Mammary epithelial cell (primary cell): ENCODE measurements at regions of chr1 and their contacts with region 1.

Region 1: GRCh38 chr1:110412576-110412975 is 5.1 kb upstream of the LAMTOR5 start:
- DNase-seq: peak; percentile 58
- H3K4me3 ChIP-seq: no peak overlapping the region
- H3K27ac ChIP-seq: no peak overlapping the region
- H3K4me1 ChIP-seq: no peaks in the 10 kb centered on the region
- H3K27me3 ChIP-seq: no peaks in the 10 kb centered on the region
- CTCF ChIP-seq: peak; percentile 63 to 89

Region 2: GRCh38 chr1:110433803-110434202 is 21.2 kb after region 1 on chr1:
- CTCF ChIA-PET with region 1: interaction called, 5 read pairs
- dilution Hi-C with region 1: no loop called
- in situ Hi-C with region 1: no loop called
- intact Hi-C with region 1: loop called (anchors 1 kb)
- DNase-seq: peak; percentile 74
- H3K4me3 ChIP-seq: no peak overlapping the region
- H3K27ac ChIP-seq: no peak overlapping the region
- H3K4me1 ChIP-seq: no peaks in the 10 kb centered on the region
- H3K27me3 ChIP-seq: peaks cover 9% of the 10 kb centered on the region
- CTCF ChIP-seq: peak in 1 of 2 donors; percentile 58